ENCODE measurements at regions of chr3 and their contacts with region 1.

Region 1: DNA sequence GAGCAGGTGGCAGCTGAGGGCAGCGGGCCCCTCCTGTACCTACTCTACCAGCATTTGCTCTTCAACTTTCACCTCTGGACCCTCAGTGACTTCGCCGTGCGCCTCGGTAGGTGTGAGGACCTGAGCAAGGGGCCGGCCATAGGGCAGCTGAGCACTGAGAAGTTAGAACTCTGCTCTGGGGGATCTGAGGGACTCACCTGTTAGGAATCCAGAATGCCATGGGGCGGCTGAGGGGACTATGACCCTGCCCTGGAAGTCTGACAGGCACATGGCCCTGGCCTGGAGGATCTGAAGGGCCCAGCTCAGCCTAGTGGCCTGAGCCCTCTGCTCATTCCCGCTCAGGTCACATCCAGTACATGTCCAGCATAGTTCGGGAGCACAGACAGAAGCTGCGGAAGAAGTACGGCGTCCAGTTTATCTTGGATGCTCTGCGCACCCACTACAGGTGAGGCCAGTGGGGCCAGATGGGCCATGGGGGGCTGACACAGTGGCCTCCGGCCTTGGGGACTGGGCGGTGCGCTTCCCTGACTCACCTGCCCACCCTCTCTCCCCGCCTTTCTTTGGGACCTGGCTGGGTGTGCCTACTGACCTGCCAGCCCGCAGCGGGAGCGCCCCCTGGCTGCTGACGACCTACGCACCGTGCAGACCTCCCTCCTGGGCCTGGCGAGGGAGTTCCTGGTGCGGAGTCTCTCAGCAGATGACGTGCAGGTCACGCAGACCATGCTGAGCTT is 18.8 kb downstream of the NBEAL2 start:
- DNase-seq: peak; percentile 89
- ATAC-seq: peak; percentile 73

Region 2: GRCh38 chr3:46923559-46924350 is 74.5 kb before region 1 on chr3:
- intact Hi-C with region 1: loop called (anchors 1 kb)
- DNase-seq: no peak
- ATAC-seq: peak; percentile 27